Left lung (tissue), 14 donors: ENCODE measurements at regions of chr1 and their contacts with region 1.

Region 1: DNA sequence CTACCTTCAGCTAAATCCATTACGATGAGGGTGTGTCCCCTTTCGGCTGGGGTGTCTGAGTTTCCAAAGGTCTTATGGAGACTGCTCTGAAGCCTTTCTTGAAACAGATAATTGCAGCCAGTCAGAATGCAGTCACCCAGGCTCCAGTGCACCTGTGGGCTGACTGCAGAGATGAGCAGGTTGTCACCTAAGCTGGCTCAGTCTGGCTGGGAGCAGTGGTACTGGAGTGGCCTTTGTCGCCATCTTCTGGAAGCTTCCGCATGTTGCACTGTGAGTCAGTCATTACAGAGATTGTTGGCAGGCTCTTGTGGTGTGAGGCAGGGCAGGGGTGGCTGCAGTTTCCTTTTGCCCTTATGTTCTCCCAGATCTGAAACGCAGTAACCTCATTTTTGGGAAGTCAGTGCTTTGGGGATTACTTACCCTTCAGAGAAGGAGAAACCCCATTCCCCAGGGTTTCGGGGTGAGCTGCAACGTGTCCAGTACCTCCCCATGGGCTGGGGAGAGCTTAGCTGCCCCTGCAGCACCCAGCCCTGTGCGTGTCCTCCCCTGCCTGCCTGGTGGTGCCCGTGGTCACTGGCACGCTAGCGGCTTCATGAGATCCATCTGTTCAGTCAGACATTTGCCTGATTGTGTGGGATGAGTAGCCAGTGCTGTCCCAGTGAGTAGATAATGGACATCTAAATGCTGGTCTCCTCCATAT is 48.0 kb downstream of the SMYD2 start:
- DNase-seq: peak in 3 of 4 donors; percentile 63 to 83 (median 71)
- ATAC-seq: peak; percentile 96
- H3K4me3 ChIP-seq: no peak overlapping the region
- H3K27ac ChIP-seq: no peak overlapping the region
- H3K4me1 ChIP-seq: no peaks in the 10 kb centered on the region
- H3K27me3 ChIP-seq: no peaks in the 10 kb centered on the region
- CTCF ChIP-seq: peak; percentile 61 to 86

Region 2: GRCh38 chr1:214213136-214213535 is 115.8 kb before region 1 on chr1:
- intact Hi-C with region 1: loop called in 1 of 2 experiments (anchors 10 kb)
- DNase-seq: no peak
- ATAC-seq: no peak
- H3K4me3 ChIP-seq: no peak overlapping the region
- H3K27ac ChIP-seq: no peak overlapping the region
- H3K4me1 ChIP-seq: peaks cover 0 to 3% of the 10 kb centered on the region in 2 donors
- H3K27me3 ChIP-seq: peaks cover 0 to 9% of the 10 kb centered on the region in 2 donors
- CTCF ChIP-seq: no peak

Region 3: GRCh38 chr1:214261206-214262123 is 67.5 kb before region 1 on chr1:
- intact Hi-C with region 1: loop called in 1 of 2 experiments (anchors 2 kb)
- DNase-seq: peak; percentile 71 to 94 (median 80)
- ATAC-seq: peak; percentile 100
- H3K4me3 ChIP-seq: no peak overlapping the region
- H3K27ac ChIP-seq: no peak overlapping the region
- H3K4me1 ChIP-seq: no peaks in the 10 kb centered on the region
- H3K27me3 ChIP-seq: peaks cover 12 to 73% of the 10 kb centered on the region in 2 donors
- CTCF ChIP-seq: peak; percentile 94 to 95

Region 4: DNA sequence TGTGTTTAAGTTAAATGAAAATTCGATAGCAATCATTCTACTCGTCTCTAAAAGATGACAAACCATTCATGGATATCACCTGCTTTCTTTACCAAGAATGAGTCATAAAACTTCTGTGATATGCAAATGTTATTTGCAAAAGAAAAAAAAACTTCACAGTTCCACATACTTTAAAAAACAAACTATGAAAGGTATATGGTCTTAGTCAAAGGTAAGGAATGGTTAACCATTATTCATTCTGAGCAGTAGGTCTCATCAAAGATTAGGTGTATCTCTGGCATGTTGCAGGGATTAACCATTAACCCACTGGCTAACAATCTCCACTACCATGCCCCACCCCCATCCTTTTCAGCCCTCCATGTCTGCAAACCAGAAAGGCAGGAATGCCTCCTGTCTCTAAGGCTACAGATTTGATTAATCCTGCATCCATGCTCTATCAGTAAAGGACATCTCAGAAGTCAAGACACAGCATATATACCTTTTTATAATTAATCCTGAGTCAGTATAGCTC is 178.1 kb after region 1 on chr1:
- intact Hi-C with region 1: no loop called
- DNase-seq: peak in 1 of 4 donors; percentile 37
- ATAC-seq: peak; percentile 65
- H3K4me3 ChIP-seq: no peak overlapping the region
- H3K27ac ChIP-seq: no peak overlapping the region
- H3K4me1 ChIP-seq: peaks cover 0 to 4% of the 10 kb centered on the region in 2 donors
- H3K27me3 ChIP-seq: no peaks in the 10 kb centered on the region
- CTCF ChIP-seq: no peak

Region 5: GRCh38 chr1:214584805-214585766 is 256.2 kb after region 1 on chr1:
- intact Hi-C with region 1: loop called in 1 of 2 experiments (anchors 5 kb)
- DNase-seq: peak in 1 of 4 donors; percentile 18
- ATAC-seq: peak; percentile 88
- H3K4me3 ChIP-seq: no peak overlapping the region
- H3K27ac ChIP-seq: no peak overlapping the region
- H3K4me1 ChIP-seq: no peaks in the 10 kb centered on the region
- H3K27me3 ChIP-seq: no peaks in the 10 kb centered on the region
- CTCF ChIP-seq: peak; percentile 41 to 71